HEK293 (cell line): ENCODE measurements at regions of chrX and their contacts with region 1.

Region 1: GRCh38 chrX:118627084-118627758 is 100.2 kb upstream of the IL13RA1 start:
- H3K4me3 ChIP-seq: no peak overlapping the region
- H3K27ac ChIP-seq: no peak overlapping the region
- H3K4me1 ChIP-seq: no peaks in the 10 kb centered on the region
- CTCF ChIP-seq: 0 out of 2 replicates have a peak, but pooled peaks have one; percentile 24

Region 2: GRCh38 chrX:118550792-118551191 is 76.4 kb before region 1 on chrX:
- CTCF ChIA-PET with region 1: no interaction called
- POLR2A ChIA-PET with region 1: no interaction called
- H3K4me3 ChIP-seq: no peak overlapping the region
- H3K27ac ChIP-seq: no peak overlapping the region
- H3K4me1 ChIP-seq: peaks cover 5% of the 10 kb centered on the region; the same call in 1 of the 2 replicates
- CTCF ChIP-seq: no peak

Region 3: GRCh38 chrX:118562582-118563164 is 64.5 kb before region 1 on chrX:
- CTCF ChIA-PET with region 1: no interaction called
- POLR2A ChIA-PET with region 1: no interaction called
- H3K4me3 ChIP-seq: no peak overlapping the region
- H3K27ac ChIP-seq: no peak overlapping the region
- H3K4me1 ChIP-seq: no peaks in the 10 kb centered on the region
- CTCF ChIP-seq: no peak

Region 4: DNA sequence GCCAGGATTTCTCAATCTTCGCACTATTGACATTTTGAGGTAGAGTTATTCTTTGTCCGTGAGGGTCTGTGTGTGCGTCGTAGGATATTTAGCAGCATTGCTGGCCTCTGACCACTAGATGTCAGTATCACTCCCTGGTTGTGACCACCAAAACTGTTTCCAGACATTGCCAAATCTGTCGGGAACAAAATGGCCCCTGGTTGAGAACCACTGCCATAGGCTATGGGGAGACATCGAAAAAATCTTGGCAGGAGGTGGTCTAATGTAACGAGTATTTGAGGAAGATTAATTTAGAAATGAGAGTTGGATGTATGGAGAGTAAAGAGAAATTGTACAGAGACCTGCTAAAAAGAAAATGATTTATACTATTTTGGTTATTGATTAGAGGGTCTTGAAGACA is 23.2 kb before region 1 on chrX:
- CTCF ChIA-PET with region 1: interaction called, 12 read pairs
- POLR2A ChIA-PET with region 1: no interaction called
- H3K4me3 ChIP-seq: no peak overlapping the region
- H3K27ac ChIP-seq: no peak overlapping the region
- H3K4me1 ChIP-seq: no peaks in the 10 kb centered on the region
- CTCF ChIP-seq: peak; percentile 80

Region 5: DNA sequence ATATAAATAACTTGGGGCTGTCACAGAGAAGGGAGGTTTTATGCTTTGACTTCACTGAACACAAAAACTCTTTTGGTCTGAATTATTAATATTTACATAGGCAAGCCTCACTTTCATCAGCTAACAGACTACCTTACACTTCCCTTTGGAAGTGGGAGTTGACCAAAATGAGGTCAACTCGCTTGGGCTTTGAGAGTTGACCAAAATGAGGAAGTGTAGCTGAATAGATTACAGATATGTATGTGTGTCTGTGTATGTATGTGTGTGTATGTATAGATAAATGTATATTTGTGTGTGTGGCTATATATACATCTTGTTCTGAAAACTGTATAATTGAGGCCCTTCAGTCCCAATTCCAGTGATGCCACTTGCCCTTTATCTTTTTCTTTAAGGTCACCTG is 13.1 kb before region 1 on chrX:
- CTCF ChIA-PET with region 1: interaction called, 19 read pairs
- POLR2A ChIA-PET with region 1: no interaction called
- H3K4me3 ChIP-seq: no peak overlapping the region
- H3K27ac ChIP-seq: no peak overlapping the region
- H3K4me1 ChIP-seq: no peaks in the 10 kb centered on the region
- CTCF ChIP-seq: no peak

Region 6: DNA sequence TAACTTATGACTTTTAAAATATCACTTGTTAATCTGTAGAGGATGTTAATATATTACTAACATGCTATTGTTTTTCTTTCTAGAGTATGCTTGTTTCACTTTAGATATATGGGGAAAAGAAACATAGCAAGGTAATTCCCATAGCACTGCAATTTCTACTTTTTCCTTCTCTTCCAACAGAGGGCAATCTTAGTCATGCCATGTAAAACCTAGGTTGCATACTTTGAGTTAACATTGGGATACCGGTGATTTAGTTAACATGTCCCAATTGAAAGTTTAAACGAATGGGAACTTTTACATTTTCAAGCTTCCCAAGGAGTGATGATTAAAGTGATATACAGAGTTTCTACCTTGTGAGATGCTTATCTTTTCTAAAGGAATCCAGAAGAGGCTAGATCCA is 10.8 kb after region 1 on chrX:
- CTCF ChIA-PET with region 1: interaction called, 22 read pairs
- POLR2A ChIA-PET with region 1: no interaction called
- H3K4me3 ChIP-seq: no peak overlapping the region
- H3K27ac ChIP-seq: no peak overlapping the region
- H3K4me1 ChIP-seq: no peaks in the 10 kb centered on the region
- CTCF ChIP-seq: no peak

Region 7: DNA sequence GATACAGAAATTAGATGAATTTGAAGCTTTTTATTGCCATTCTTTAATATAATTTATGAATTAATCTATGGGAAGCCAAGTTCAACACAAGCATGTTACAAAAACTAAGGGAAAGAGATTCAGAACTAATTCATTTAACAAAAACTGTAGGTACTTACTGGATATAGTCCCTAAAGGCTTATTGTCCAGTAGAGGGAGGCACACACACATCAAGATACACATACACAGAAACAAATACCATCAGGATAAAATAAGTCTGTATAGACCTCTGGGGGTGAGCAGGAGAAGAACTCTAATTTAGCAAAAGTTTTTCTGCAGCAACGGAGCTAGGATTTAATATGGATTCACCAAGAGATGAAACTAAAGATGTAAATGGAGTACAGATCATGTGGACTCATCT is 17.2 kb after region 1 on chrX:
- CTCF ChIA-PET with region 1: interaction called, 10 read pairs
- POLR2A ChIA-PET with region 1: no interaction called
- H3K4me3 ChIP-seq: no peak overlapping the region
- H3K27ac ChIP-seq: no peak overlapping the region
- H3K4me1 ChIP-seq: no peaks in the 10 kb centered on the region
- CTCF ChIP-seq: peak; percentile 52

Region 8: GRCh38 chrX:118772051-118772450 is 144.8 kb after region 1 on chrX:
- CTCF ChIA-PET with region 1: interaction called, 10 read pairs
- POLR2A ChIA-PET with region 1: no interaction called
- H3K4me3 ChIP-seq: no peak overlapping the region
- H3K27ac ChIP-seq: no peak overlapping the region
- H3K4me1 ChIP-seq: no peaks in the 10 kb centered on the region
- CTCF ChIP-seq: no peak

Region 9: DNA sequence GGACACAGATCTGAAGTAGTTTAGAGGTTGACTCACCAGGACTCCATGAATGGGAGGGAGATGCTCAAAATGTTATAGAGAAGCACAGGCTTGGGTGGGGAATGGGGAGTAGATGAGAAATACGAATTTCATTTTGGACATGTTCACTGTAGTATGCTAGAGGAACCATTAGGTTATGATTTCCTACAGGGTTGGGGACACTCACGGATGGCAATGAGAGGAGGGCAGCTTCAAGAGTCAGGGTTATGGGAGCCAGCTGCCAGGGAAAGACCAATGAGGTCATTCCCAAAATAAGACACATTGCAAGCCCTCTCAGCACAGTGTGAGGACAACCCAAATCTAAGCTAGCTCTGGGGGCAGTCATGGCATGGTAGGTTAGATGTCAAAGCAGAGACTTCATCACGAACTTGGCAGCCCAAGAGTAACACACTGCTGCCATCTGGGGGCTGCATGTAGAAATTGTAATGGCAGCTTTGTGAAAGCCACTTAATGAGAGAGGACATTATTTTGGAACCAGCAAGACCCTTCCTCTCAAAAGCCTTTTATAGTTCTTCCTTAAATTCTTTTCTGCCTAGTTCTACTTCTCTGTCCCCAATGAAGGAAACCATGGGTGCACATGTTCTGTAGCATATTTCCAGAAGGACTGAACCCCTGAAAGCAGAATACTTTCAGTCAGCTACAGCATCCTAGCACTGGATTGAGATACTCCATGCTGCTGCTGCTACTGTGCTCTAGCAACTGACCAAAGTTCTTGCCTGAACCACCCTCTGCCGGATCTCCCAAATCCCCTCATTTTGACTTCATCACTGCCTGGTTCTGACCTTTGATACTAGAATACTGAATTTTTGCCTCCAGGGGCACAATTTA is 180.2 kb after region 1 on chrX:
- CTCF ChIA-PET with region 1: interaction called, 26 read pairs
- POLR2A ChIA-PET with region 1: no interaction called
- H3K4me3 ChIP-seq: no peak overlapping the region
- H3K27ac ChIP-seq: no peak overlapping the region
- H3K4me1 ChIP-seq: no peaks in the 10 kb centered on the region
- CTCF ChIP-seq: peak; percentile 79